ENCODE measurements at regions of chr5 and their contacts with region 1.

Region 1: DNA sequence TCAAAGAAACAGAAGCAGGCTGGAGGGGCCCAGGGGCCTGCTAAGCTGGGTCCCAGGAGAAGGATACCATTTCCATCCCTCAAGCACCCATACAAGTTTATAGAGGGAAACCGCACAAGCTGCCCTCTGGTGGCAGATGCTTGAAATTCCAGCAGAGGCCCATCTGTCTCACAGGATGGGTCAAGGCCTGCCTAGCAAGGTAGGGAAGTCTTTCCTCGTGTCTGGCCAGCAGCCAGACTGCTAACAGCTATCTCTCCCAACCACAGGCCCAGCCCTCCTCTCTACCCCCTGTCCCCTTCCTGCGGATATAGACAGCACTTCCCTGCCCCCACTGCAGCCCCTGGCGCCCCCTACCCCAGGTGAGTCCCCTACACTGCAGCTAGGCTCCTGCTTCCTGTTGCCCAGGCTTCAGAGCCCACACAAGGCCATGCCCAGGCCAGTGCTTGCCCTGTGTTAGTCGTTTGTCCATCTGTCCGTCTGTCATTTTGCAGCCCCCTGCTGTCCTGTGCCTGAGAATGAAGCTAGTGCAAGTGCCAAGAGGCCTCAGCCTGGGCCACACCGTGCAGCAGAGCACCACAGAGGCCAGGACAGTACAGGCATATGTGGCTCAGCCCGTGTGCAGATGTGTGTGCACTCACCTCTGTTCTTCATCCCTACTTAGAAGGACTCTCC is 26.2 kb downstream of the TCF7 start:
- DNase-seq: peak; percentile 56 to 79
- H3K4me3 ChIP-seq: no peak overlapping the region
- H3K4me1 ChIP-seq: no peaks in the 10 kb centered on the region
- H3K27me3 ChIP-seq: no peaks in the 10 kb centered on the region

Region 2: GRCh38 chr5:134038138-134038537 is 102.5 kb before region 1 on chr5:
- in situ Hi-C with region 1: loop called (anchors 5 kb)
- DNase-seq: no peak
- H3K4me3 ChIP-seq: no peak overlapping the region
- H3K4me1 ChIP-seq: no peaks in the 10 kb centered on the region
- H3K27me3 ChIP-seq: no peaks in the 10 kb centered on the region

Region 3: GRCh38 chr5:134063188-134063820 is 77.4 kb before region 1 on chr5:
- in situ Hi-C with region 1: no loop called
- DNase-seq: no peak
- H3K4me3 ChIP-seq: no peak overlapping the region
- H3K4me1 ChIP-seq: no peaks in the 10 kb centered on the region
- H3K27me3 ChIP-seq: no peaks in the 10 kb centered on the region

Region 4: DNA sequence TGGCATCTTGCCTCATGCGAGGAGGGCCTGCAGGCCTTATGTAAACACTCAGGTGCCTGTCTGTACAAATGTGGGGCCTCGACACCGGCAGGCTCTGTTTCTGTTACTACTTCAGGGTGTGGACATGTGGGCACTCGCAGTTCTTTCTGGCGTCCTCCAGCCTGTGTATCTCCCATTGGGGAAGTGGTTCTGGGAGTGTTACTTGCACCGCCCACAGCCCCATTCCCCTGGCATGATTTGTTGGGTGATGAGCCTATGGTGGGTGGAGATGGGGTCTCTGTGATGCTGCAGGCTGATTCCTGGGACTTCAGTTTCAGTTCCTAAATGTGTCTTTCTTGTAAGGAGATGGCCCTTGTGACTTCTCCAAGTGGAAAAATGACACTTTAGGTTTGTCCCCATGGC is 975.5 kb after region 1 on chr5:
- in situ Hi-C with region 1: no loop called
- DNase-seq: no peak
- H3K4me3 ChIP-seq: no peak overlapping the region
- H3K4me1 ChIP-seq: peaks cover 4% of the 10 kb centered on the region; the same call in 1 of the 2 replicates
- H3K27me3 ChIP-seq: no peaks in the 10 kb centered on the region